HAP-1 (cell line): ENCODE measurements at regions of chr5 and their contacts with region 1.

Region 1: GRCh38 chr5:112419986-112420864 is 1.1 kb upstream of the EPB41L4A start:
- DNase-seq: peak; percentile 36 to 83
- H3K4me3 ChIP-seq: peak overlapping the region; percentile 51
- H3K4me1 ChIP-seq: no peaks in the 10 kb centered on the region; the same call in 1 of the 2 replicates
- H3K27me3 ChIP-seq: peaks cover 46% of the 10 kb centered on the region

Region 2: GRCh38 chr5:112210430-112211005 is 209.7 kb before region 1 on chr5:
- in situ Hi-C with region 1: loop called (anchors 25 kb)
- DNase-seq: peak in 1 of 2 experiments; percentile 44
- H3K4me3 ChIP-seq: no peak overlapping the region
- H3K4me1 ChIP-seq: no peaks in the 10 kb centered on the region
- H3K27me3 ChIP-seq: peaks cover 3% of the 10 kb centered on the region; the same call in 1 of the 2 replicates